ENCODE measurements at regions of chr14 and their contacts with region 1.

Region 1: GRCh38 chr14:51780006-51780692 is 80.3 kb upstream of the GNG2 start:
- DNase-seq: peak; percentile 54 to 78 (median 68)
- H3K4me3 ChIP-seq: peak overlapping the region in 1 of 7 experiments; percentile 7
- H3K27ac ChIP-seq: no peak overlapping the region
- H3K4me1 ChIP-seq: peaks cover 0 to 11% (median 5%) of the 10 kb centered on the region in 4 experiments
- H3K27me3 ChIP-seq: peaks cover 0 to 2% (median 0%) of the 10 kb centered on the region in 5 experiments

Region 2: DNA sequence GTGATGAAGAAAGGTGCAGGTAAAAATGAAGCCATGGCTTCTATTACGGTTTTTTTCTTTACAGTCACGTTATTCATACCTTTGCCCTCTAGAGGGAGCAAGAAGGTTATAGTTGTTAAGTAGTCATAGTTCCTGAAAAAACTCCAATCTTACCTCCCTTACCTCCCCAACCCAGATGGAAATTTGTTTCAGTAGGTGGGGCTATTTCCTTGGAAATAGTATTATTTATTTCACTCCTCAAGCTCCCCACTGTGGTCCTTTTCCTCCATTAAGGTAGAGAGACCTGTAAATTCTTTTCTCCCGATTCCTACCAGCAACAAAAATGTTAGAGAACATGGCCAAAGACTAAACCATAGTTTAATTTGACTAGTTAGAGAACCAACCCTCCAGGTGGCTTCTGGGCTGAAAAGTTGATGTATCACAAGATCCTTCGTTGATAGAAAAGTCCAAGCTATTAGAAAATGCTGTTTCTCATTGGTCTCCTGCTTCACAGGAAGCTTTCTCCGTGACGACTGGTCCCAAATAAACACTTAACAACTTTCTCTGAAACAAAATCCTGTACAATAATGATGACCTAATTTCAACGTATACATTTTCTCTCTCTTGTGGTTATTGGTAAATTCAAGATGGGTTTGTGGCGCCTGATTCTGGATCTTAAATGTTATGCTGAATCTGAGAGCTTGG is 496.6 kb before region 1 on chr14:
- CTCF ChIA-PET with region 1: interaction called, 31 read pairs
- POLR2A ChIA-PET with region 1: no interaction called
- DNase-seq: peak; percentile 50 to 67 (median 62)
- H3K4me3 ChIP-seq: no peak overlapping the region
- H3K27ac ChIP-seq: no peak overlapping the region
- H3K4me1 ChIP-seq: peaks cover 0 to 4% (median under 1%) of the 10 kb centered on the region in 4 experiments
- H3K27me3 ChIP-seq: no peaks in the 10 kb centered on the region

Region 3: GRCh38 chr14:51609955-51610283 is 170.2 kb before region 1 on chr14:
- CTCF ChIA-PET with region 1: no interaction called
- POLR2A ChIA-PET with region 1: no interaction called
- DNase-seq: no peak
- H3K4me3 ChIP-seq: no peak overlapping the region
- H3K27ac ChIP-seq: no peak overlapping the region
- H3K4me1 ChIP-seq: no peaks in the 10 kb centered on the region
- H3K27me3 ChIP-seq: peaks cover 0 to 9% (median 0%) of the 10 kb centered on the region in 5 experiments

Region 4: GRCh38 chr14:51651388-51652167 is 128.6 kb before region 1 on chr14 and contains the start of gene FRMD6:
- CTCF ChIA-PET with region 1: interaction called, 19 read pairs
- POLR2A ChIA-PET with region 1: no interaction called
- DNase-seq: peak; percentile 78 to 91 (median 89)
- H3K4me3 ChIP-seq: peak within 1 kb of the TSS; percentile 78 to 96 (median 85)
- H3K27ac ChIP-seq: peak within 1 kb of the TSS; percentile 72 to 83
- H3K4me1 ChIP-seq: peaks cover 24 to 46% (median 39%) of the 10 kb centered on the region in 4 experiments
- H3K27me3 ChIP-seq: no peaks in the 10 kb centered on the region